Activated CD8-positive, alpha-beta T cell treated with anti-CD3 and anti-CD28 coated beads for 36 hours (primary cell): ENCODE measurements at regions of chr1 and their contacts with region 1.

Region 1: DNA sequence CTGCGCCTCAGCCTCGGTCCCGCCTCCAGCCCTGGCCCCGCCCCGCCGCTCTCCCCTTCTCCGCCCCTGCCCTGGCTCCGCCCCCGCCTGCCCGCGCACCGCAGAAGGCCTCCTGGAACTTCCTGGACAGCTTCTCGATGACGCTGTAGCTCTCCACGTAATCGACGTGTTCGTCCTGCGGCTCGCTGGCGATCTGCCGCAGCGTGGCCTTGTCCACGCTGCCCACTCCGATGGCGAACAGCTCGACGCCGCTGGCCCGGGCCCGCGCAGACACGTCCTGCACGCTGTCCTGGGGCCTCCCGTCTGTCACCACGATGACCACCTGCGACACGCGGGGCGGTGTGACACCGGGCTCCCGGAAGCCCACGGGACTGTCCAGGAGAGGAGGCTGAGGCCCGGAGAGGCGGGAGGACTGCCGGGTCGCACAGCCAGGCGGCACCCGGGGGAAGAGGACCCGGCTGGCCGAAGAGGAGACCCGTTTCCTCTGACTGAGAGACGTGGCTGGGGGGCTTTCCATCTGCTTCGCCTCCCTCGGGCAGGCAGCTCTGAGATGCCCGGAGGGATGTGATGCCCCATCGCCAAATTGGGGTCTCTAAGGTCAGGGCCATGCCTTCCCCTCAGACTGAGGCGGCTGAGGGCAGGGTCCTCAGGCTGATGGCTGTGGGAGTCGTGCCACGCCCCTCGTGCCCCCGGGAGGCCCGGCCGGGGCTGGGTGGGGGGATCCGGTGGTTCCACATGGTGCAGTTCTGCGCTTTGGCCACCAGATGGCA is 4.6 kb downstream of the MATN1 start:
- DNase-seq: peak; percentile 100
- ATAC-seq: peak; percentile 70
- H3K4me3 Mint-ChIP-seq: peak overlapping the region; percentile 88
- H3K27ac Mint-ChIP-seq: peak overlapping the region; percentile 93
- H3K4me1 Mint-ChIP-seq: peaks cover 29% of the 10 kb centered on the region
- H3K27me3 Mint-ChIP-seq: no peaks in the 10 kb centered on the region
- CTCF ChIP-seq: no peak

Region 2: GRCh38 chr1:30700528-30701257 is 18.1 kb before region 1 on chr1:
- CTCF ChIA-PET with region 1: no interaction called
- POLR2A ChIA-PET with region 1: no interaction called
- intact Hi-C with region 1: no loop called
- DNase-seq: no peak
- ATAC-seq: no peak
- H3K4me3 Mint-ChIP-seq: no peak overlapping the region
- H3K27ac Mint-ChIP-seq: no peak overlapping the region
- H3K4me1 Mint-ChIP-seq: no peaks in the 10 kb centered on the region
- H3K27me3 Mint-ChIP-seq: no peaks in the 10 kb centered on the region
- CTCF ChIP-seq: no peak

Region 3: DNA sequence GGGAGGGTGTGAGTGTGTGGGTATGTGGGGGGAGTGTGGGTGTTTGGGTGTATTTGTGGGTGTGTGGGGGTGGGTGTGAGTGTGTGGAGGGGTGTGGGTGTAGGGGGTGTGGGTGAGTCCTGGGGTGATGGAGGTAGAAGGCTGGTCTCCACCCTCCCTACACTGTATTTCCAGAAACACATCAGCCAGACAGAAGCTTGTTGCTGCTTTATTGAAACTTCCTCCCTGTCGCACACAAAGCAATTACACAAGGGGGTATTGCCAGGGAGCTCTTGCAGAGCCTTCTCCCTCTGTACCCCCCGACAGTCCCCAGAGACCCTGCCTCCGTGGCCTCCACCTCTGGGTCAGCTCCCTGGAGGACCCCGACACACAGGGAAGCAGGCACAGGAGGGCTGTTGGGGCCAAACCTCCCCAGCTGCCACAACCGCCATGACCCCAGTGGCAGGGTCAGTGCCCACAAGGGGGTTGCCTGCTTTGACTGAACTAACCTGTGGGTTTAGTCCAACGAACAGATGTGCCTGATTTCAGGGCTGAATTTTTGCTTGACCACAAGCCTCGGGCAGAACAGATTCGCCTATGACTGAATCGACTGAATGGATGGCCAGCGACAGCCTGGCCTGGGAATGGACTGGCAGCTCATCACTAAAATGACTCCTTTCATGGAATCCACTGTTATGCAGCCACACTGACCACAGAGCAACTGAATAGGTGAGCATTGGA is 13.6 kb after region 1 on chr1:
- CTCF ChIA-PET with region 1: interaction called, 21 read pairs
- POLR2A ChIA-PET with region 1: interaction called, 16 read pairs
- intact Hi-C with region 1: no loop called
- DNase-seq: no peak
- ATAC-seq: peak; percentile 32
- H3K4me3 Mint-ChIP-seq: no peak overlapping the region
- H3K27ac Mint-ChIP-seq: peak overlapping the region; percentile 73
- H3K4me1 Mint-ChIP-seq: peaks cover 22% of the 10 kb centered on the region
- H3K27me3 Mint-ChIP-seq: no peaks in the 10 kb centered on the region
- CTCF ChIP-seq: no peak

Region 4: GRCh38 chr1:30749691-30750583 is 31.1 kb after region 1 on chr1:
- CTCF ChIA-PET with region 1: interaction called, 80 read pairs
- POLR2A ChIA-PET with region 1: interaction called, 671 read pairs
- intact Hi-C with region 1: no loop called
- DNase-seq: peak; percentile 86
- ATAC-seq: peak; percentile 53
- H3K4me3 Mint-ChIP-seq: peak overlapping the region; percentile 87
- H3K27ac Mint-ChIP-seq: peak overlapping the region; percentile 98
- H3K4me1 Mint-ChIP-seq: peaks cover 96% of the 10 kb centered on the region
- H3K27me3 Mint-ChIP-seq: no peaks in the 10 kb centered on the region
- CTCF ChIP-seq: no peak

Region 5: GRCh38 chr1:30763651-30764248 is 44.9 kb after region 1 on chr1:
- CTCF ChIA-PET with region 1: interaction called, 16 read pairs
- POLR2A ChIA-PET with region 1: interaction called, 671 read pairs
- intact Hi-C with region 1: no loop called
- DNase-seq: no peak
- ATAC-seq: no peak
- H3K4me3 Mint-ChIP-seq: no peak overlapping the region
- H3K27ac Mint-ChIP-seq: peak overlapping the region; percentile 81
- H3K4me1 Mint-ChIP-seq: peaks cover 90% of the 10 kb centered on the region
- H3K27me3 Mint-ChIP-seq: no peaks in the 10 kb centered on the region
- CTCF ChIP-seq: no peak

Region 6: DNA sequence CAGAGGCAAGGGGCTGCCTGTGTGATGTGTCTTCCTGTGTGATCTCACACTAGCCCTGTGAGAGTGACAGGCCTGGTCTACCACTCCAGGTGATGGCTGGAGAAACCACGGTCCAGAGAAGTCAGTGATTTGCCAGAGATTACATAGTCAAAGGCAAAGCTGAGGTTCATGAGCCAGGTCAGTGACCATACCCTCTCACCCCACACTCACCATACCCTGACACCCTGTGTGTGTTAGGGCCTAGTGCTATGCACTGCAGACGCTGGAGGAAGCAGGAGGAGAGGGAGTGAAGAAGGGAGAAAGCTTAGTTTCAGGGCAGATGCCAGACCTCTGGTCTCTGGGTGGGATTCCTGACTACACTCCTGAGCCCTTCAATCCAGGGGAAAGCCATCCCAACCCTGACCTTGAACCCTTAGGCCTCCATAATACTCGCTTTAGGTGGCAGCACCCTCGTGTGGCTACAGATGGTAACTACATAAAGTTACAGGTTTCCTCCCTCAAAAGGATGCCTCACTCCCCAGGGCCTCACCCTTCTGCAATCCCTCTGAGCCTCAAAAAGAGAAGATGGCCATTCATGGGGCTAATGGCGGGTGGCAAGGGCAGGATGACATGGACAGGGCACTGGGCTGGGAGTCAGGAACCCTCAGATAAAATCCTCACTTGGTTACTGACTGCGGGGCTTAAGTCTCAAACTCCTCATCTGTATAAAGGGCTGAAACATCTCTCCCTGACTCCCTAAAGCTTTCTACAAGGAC is 210.5 kb after region 1 on chr1:
- CTCF ChIA-PET with region 1: interaction called, 11 read pairs
- POLR2A ChIA-PET with region 1: no interaction called
- intact Hi-C with region 1: no loop called
- DNase-seq: peak; percentile 70
- ATAC-seq: peak; percentile 88
- H3K4me3 Mint-ChIP-seq: no peak overlapping the region
- H3K27ac Mint-ChIP-seq: no peak overlapping the region
- H3K4me1 Mint-ChIP-seq: peaks cover 5% of the 10 kb centered on the region
- H3K27me3 Mint-ChIP-seq: no peaks in the 10 kb centered on the region
- CTCF ChIP-seq: peak; percentile 82